ENCODE measurements at regions of chr2 and their contacts with region 1.

Region 1: GRCh38 chr2:126776692-126777619 is 121.0 kb downstream of the GYPC start:
- DNase-seq: peak; percentile 81
- CTCF ChIP-seq: peak; percentile 95

Region 2: GRCh38 chr2:126244937-126245336 is 532.0 kb before region 1 on chr2:
- CTCF ChIA-PET with region 1: interaction called, 23 read pairs
- POLR2A ChIA-PET with region 1: no interaction called
- DNase-seq: peak; percentile 29
- CTCF ChIP-seq: peak; percentile 51

Region 3: GRCh38 chr2:126793885-126794613 is 17.1 kb after region 1 on chr2:
- CTCF ChIA-PET with region 1: interaction called, 10 read pairs
- POLR2A ChIA-PET with region 1: no interaction called
- DNase-seq: no peak
- CTCF ChIP-seq: no peak

Region 4: DNA sequence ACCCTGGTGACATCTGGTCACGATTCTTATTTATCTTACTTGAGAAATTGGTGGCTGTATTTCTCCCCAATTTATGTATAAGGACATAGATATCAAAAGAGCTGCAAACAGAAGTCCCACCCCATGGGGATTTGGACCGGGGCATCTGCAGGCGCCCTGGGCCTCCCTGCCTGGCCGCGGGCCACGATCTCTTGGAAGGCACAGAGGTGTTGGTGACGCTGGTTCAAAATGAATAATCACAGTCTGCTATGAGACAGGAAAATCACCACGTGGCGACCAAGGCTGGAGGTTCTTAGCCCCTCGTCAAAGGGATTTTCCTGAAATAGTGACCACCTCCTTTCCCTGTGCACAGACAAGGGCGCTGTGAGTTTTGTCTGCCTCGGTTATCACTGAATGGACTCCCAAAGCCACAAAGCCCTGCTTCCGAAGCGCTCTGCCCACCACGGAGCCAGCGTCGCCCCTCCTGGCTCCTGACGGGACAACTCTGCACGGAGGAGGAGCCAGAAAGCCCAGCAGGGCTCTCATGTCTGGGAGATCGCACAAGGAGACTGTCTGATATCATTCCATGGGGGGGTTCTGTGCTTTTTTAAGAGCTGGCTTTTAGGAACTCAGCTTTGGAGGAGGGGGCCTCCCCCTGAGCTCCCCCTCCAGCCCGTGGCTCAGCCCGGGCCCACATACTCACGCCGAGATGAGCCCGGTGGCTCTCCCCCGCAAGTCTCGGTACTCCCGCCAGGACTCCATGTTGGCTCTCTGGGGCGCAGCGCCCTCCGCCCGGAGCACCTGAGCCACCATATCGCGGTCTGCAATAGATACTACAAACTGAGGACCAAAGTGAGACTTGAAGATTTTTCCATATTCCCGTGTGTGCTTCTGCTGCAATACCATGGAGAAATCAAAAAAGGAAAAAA is 428.5 kb after region 1 on chr2:
- CTCF ChIA-PET with region 1: no interaction called
- POLR2A ChIA-PET with region 1: no interaction called
- DNase-seq: no peak
- CTCF ChIP-seq: no peak